Calu3 (cell line): ENCODE measurements at regions of chr1 and their contacts with region 1.

Region 1: GRCh38 chr1:9101510-9102146 is 27.3 kb downstream of the GPR157 start:
- DNase-seq: peak; percentile 50
- H3K4me3 Mint-ChIP-seq: no peak overlapping the region
- H3K27ac Mint-ChIP-seq: no peak overlapping the region
- H3K4me1 Mint-ChIP-seq: no peaks in the 10 kb centered on the region
- H3K27me3 Mint-ChIP-seq: no peaks in the 10 kb centered on the region
- CTCF ChIP-seq: peak; percentile 39

Region 2: GRCh38 chr1:8776104-8776503 is 325.5 kb before region 1 on chr1:
- CTCF ChIA-PET with region 1: no interaction called
- intact Hi-C with region 1: no loop called
- DNase-seq: no peak
- H3K4me3 Mint-ChIP-seq: no peak overlapping the region
- H3K27ac Mint-ChIP-seq: no peak overlapping the region
- H3K4me1 Mint-ChIP-seq: no peaks in the 10 kb centered on the region
- H3K27me3 Mint-ChIP-seq: no peaks in the 10 kb centered on the region
- CTCF ChIP-seq: no peak

Region 3: GRCh38 chr1:8925406-8925805 is 176.2 kb before region 1 on chr1:
- CTCF ChIA-PET with region 1: no interaction called
- intact Hi-C with region 1: loop called (anchors 10 kb)
- DNase-seq: no peak
- H3K4me3 Mint-ChIP-seq: no peak overlapping the region
- H3K27ac Mint-ChIP-seq: no peak overlapping the region
- H3K4me1 Mint-ChIP-seq: no peaks in the 10 kb centered on the region
- H3K27me3 Mint-ChIP-seq: peaks cover 18% of the 10 kb centered on the region
- CTCF ChIP-seq: no peak

Region 4: GRCh38 chr1:8955406-8955805 is 146.2 kb before region 1 on chr1:
- CTCF ChIA-PET with region 1: no interaction called
- intact Hi-C with region 1: no loop called
- DNase-seq: no peak
- H3K4me3 Mint-ChIP-seq: no peak overlapping the region
- H3K27ac Mint-ChIP-seq: no peak overlapping the region
- H3K4me1 Mint-ChIP-seq: no peaks in the 10 kb centered on the region
- H3K27me3 Mint-ChIP-seq: peaks cover 6% of the 10 kb centered on the region
- CTCF ChIP-seq: no peak

Region 5: DNA sequence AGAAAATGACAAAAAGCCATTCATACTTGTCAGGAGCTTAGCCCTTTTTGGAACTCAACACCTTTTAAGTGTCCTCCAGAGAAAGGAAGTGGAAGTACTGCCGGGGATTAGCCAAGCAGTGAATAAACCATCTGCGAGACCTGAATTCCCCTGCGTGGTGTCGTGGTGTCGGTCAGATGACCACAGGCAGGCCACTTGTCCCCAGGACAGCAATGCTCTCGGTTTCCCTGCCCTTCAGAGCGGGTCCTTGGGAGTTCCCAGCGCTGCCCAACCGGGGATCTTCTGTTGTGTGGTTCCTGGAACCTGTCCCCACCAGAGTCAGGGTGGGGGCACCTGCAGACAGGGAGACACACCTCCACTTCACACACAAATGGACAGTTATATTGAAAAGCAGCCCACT is 18.1 kb after region 1 on chr1:
- CTCF ChIA-PET with region 1: no interaction called
- intact Hi-C with region 1: no loop called
- DNase-seq: no peak
- H3K4me3 Mint-ChIP-seq: no peak overlapping the region
- H3K27ac Mint-ChIP-seq: no peak overlapping the region
- H3K4me1 Mint-ChIP-seq: peaks cover 3% of the 10 kb centered on the region
- H3K27me3 Mint-ChIP-seq: no peaks in the 10 kb centered on the region
- CTCF ChIP-seq: no peak